ENCODE measurements at regions of chr4 and their contacts with region 1.

Region 1: GRCh38 chr4:147866532-147867271 is 134.8 kb downstream of the ARHGAP10 start:
- DNase-seq: peak; percentile 79
- CTCF ChIP-seq: peak; percentile 97

Region 2: DNA sequence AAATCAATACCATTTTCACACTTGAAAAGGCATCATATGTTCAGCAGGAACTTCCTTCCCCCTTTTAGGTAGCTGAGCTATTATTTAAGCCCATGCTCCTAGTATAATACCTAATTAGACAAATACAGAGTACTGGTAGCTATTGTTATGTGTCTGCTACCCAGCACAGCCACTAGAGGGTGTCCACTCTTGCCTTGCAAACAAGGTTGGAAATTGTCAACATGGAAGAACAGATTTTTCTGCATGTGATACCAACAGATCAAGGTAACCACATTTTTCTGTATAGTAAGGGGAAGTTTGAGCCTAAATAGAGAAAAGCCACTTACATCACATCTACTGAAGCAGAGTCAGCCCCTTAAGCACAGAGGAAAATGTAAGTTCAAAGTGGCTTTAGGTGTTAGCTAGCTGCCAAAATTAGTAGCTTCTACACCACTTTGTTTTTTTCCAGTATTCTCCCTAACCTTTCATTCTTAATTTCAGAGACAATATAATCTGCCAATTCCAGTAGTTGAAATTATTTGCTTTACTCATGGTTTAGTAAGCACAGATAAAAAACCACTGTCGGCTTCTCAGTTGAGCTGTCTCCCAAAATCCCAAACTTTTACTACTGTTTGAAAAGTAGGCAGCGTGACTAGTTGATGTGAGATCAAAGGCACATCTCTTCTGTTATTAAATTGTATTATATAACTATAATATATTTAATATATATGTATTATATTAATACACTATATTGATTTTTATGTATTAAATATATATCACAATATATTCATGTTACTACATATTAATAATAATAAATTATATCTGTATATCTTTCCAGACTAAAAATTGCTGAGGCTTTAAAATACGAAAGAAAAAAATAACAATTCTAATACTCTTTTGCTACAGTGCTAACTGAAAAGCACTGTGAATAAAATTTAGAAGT is 347.6 kb before region 1 on chr4:
- in situ Hi-C with region 1: loop called (anchors 10 kb)
- DNase-seq: peak; percentile 51
- CTCF ChIP-seq: peak; percentile 90

Region 3: DNA sequence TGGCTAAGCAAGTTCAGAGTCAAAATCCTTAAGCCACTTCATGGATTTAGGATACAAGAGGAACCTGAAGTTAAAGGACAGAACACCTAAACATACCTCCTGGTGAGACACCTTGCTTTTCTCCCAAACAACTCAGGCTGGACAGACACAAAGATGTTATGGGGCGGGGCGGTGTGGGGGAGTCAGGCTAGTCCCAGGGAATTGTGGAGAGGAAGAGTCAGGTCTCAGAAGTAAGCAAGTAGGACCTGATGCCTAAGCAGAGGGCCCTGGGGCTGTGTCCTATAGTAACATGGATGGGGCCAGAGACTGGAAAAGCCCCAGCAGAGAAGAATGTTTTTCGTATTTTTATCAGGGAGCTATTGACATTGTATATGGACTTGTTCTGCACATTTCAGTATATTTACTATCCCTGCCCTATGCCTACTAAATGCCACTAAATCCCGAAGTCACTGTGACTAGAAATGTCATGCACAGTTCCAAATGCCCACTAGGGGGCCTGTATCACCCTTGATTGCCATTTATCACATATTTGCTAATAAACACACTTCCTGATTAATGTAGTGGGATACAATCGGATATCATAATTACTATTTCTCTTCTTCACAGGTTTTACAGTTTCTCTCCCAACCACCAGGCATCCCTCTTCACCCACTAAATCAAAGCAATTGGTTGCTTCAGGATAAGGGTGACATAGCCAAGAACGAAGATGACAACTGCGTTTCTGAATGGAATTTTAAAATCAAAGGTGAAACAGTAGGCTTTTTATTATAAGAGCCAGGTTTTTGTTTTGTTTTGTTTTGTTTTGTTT is 158.6 kb before region 1 on chr4:
- in situ Hi-C with region 1: loop called (anchors 5 kb)
- DNase-seq: peak; percentile 51
- CTCF ChIP-seq: peak; percentile 80

Region 4: DNA sequence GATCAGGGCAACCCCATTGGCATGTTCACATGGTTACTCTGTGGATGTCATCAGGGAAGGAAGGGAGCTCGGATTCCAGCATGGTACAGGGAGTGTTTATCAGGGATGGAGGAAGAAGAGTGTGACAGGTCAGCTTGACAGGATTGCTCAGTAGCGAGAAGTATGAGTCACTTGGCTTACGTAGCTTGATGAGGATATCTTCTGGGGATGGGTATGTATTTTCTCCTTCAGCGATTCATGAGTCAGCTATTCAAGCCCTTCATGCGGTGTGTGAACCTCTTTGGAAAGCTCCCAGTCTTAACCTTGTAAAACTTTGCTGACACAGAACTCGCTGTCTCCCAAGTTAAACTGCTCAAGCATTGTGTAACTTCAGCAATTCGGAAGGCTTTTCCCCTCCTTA is 140.6 kb after region 1 on chr4:
- in situ Hi-C with region 1: no loop called
- DNase-seq: no peak
- CTCF ChIP-seq: no peak